Activated CD8-positive, alpha-beta T cell treated with anti-CD3 and anti-CD28 coated beads for 36 hours (primary cell): ENCODE measurements at regions of chr20 and their contacts with region 1.

Region 1: DNA sequence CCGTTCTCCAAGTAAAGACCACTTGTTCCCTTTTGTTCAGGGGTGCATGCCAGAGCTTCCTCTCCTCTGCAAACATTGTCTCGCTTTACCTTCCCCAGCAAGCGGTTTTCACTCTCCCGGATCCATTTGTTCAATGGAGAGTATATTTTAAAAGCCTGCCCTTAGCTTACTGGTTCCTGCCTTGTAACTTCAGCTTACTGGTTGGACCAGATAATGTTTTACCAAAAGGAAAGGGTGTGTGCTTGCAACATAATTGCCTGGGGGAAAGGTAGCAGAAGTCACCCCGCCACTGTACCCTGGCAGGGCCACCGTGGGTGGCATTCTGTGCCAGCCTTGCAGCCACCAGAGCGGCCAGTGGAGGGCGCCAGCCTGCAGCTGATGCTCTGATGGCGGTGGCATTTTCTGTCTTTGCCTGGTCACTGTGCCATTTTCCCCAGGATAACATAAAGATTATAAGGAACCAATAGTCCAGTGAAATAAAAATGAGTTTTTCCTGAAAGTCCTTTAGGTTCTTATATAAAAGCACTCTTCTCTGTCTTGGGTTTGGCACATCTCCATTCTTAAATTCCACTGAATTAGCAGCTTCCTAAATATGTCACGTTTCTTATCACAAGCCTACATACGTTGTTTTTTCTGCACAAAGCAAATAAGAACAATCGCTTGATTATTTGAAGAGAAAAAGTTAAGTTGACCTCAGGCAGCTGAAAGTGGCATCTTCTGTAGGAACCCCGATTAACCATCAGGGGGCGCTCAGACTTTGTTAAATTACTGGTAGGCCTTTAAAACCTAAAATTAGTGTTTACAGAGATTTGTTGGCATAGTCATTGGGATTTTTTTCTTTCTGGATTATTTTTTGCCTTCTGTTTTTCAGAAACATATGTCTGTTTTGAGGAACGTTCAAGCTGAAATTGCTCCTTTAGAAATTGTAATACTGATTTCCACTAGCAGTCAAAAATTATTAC is 67.4 kb upstream of the XRN2 start:
- DNase-seq: peak; percentile 81
- ATAC-seq: peak; percentile 84
- H3K4me3 Mint-ChIP-seq: no peak overlapping the region
- H3K27ac Mint-ChIP-seq: no peak overlapping the region
- H3K4me1 Mint-ChIP-seq: peaks cover 4% of the 10 kb centered on the region
- H3K27me3 Mint-ChIP-seq: no peaks in the 10 kb centered on the region
- CTCF ChIP-seq: peak; percentile 98

Region 2: DNA sequence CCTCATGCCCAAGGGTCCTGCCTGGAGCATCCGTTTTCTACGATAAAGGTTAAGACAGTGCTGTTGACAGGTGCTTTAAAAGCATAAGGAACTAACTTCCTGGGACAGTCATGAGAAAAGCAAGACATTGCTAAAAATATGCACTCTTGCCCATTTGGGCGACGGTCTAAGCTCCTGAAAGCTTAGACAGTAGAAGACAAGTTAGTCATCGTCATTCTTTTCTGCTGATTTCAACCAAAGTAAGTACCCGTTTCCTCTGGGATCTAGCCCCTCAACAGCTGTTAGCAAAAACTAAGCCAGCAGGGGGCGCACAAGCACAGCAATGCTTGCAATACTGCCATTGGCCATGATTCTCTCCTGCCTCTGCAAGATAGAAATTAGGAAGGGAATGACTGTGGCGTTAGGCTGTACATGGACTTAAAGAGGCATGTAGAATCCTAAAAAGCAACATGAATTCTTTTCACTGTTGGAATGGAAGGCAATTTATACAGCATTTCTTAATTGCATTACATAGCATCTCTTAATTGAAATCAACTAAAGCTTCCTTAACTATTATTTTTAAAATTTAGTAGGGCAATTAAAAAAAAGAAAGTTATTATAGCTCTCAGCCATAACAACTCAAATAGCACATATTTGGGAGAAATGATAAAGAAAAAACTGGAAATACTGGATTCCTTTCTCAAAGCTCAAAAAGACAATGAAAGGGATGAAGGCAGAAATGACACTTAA is 375.5 kb before region 1 on chr20:
- CTCF ChIA-PET with region 1: interaction called, 11 read pairs
- POLR2A ChIA-PET with region 1: no interaction called
- intact Hi-C with region 1: no loop called
- DNase-seq: peak; percentile 94
- ATAC-seq: peak; percentile 77
- H3K4me3 Mint-ChIP-seq: no peak overlapping the region
- H3K27ac Mint-ChIP-seq: no peak overlapping the region
- H3K4me1 Mint-ChIP-seq: no peaks in the 10 kb centered on the region
- H3K27me3 Mint-ChIP-seq: peaks cover 4% of the 10 kb centered on the region
- CTCF ChIP-seq: peak; percentile 94

Region 3: GRCh38 chr20:21074605-21075336 is 161.0 kb before region 1 on chr20:
- CTCF ChIA-PET with region 1: no interaction called
- POLR2A ChIA-PET with region 1: no interaction called
- intact Hi-C with region 1: no loop called
- DNase-seq: peak; percentile 19
- ATAC-seq: peak; percentile 37
- H3K4me3 Mint-ChIP-seq: no peak overlapping the region
- H3K27ac Mint-ChIP-seq: no peak overlapping the region
- H3K4me1 Mint-ChIP-seq: no peaks in the 10 kb centered on the region
- H3K27me3 Mint-ChIP-seq: peaks cover 23% of the 10 kb centered on the region
- CTCF ChIP-seq: no peak

Region 4: GRCh38 chr20:21246161-21246560 is 10.4 kb after region 1 on chr20:
- CTCF ChIA-PET with region 1: interaction called, 22 read pairs
- POLR2A ChIA-PET with region 1: no interaction called
- intact Hi-C with region 1: no loop called
- DNase-seq: no peak
- ATAC-seq: no peak
- H3K4me3 Mint-ChIP-seq: no peak overlapping the region
- H3K27ac Mint-ChIP-seq: no peak overlapping the region
- H3K4me1 Mint-ChIP-seq: peaks cover 5% of the 10 kb centered on the region
- H3K27me3 Mint-ChIP-seq: peaks cover 1% of the 10 kb centered on the region
- CTCF ChIP-seq: no peak

Region 5: GRCh38 chr20:21344961-21345360 is 109.2 kb after region 1 on chr20:
- CTCF ChIA-PET with region 1: interaction called, 13 read pairs
- POLR2A ChIA-PET with region 1: no interaction called
- intact Hi-C with region 1: no loop called
- DNase-seq: no peak
- ATAC-seq: no peak
- H3K4me3 Mint-ChIP-seq: no peak overlapping the region
- H3K27ac Mint-ChIP-seq: no peak overlapping the region
- H3K4me1 Mint-ChIP-seq: no peaks in the 10 kb centered on the region
- H3K27me3 Mint-ChIP-seq: no peaks in the 10 kb centered on the region
- CTCF ChIP-seq: no peak

Region 6: DNA sequence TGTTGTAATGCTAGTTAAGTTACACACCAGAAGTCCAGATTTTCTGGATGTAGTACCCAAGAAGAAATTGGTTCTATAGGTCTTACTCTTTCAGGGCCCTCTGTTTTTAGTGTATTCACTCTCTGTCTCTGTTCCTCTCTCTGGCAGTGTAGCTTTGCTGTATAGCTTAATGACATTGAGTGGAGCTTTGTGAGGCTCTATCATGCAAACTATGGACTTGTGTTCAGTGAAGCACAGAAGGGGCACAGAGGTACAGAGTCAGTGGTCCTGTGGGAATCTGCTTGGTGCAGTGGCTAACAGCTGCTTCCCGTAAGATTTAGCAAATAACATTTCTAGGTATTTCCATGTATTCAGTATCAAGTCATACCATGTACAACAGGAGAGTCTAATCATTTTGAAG is 135.4 kb after region 1 on chr20:
- CTCF ChIA-PET with region 1: interaction called, 10 read pairs
- POLR2A ChIA-PET with region 1: no interaction called
- intact Hi-C with region 1: no loop called
- DNase-seq: no peak
- ATAC-seq: no peak
- H3K4me3 Mint-ChIP-seq: no peak overlapping the region
- H3K27ac Mint-ChIP-seq: no peak overlapping the region
- H3K4me1 Mint-ChIP-seq: peaks cover 3% of the 10 kb centered on the region
- H3K27me3 Mint-ChIP-seq: no peaks in the 10 kb centered on the region
- CTCF ChIP-seq: no peak

Region 7: GRCh38 chr20:21496452-21496851 is 260.7 kb after region 1 on chr20:
- CTCF ChIA-PET with region 1: interaction called, 256 read pairs
- POLR2A ChIA-PET with region 1: no interaction called
- intact Hi-C with region 1: no loop called
- DNase-seq: no peak
- ATAC-seq: no peak
- H3K4me3 Mint-ChIP-seq: no peak overlapping the region
- H3K27ac Mint-ChIP-seq: no peak overlapping the region
- H3K4me1 Mint-ChIP-seq: no peaks in the 10 kb centered on the region
- H3K27me3 Mint-ChIP-seq: peaks cover 24% of the 10 kb centered on the region
- CTCF ChIP-seq: no peak

Region 8: GRCh38 chr20:21571841-21572690 is 336.3 kb after region 1 on chr20:
- CTCF ChIA-PET with region 1: interaction called, 48 read pairs
- POLR2A ChIA-PET with region 1: no interaction called
- intact Hi-C with region 1: no loop called
- DNase-seq: peak; percentile 21
- ATAC-seq: peak; percentile 27
- H3K4me3 Mint-ChIP-seq: no peak overlapping the region
- H3K27ac Mint-ChIP-seq: no peak overlapping the region
- H3K4me1 Mint-ChIP-seq: peaks cover 6% of the 10 kb centered on the region
- H3K27me3 Mint-ChIP-seq: peaks cover 15% of the 10 kb centered on the region
- CTCF ChIP-seq: peak; percentile 98